ENCODE measurements at regions of chr9 and their contacts with region 1.

Region 1: GRCh38 chr9:22307013-22307711 is 139.5 kb upstream of the DMRTA1 start:
- DNase-seq: peak; percentile 43
- H3K4me3 Mint-ChIP-seq: no peak overlapping the region
- H3K27ac Mint-ChIP-seq: no peak overlapping the region
- H3K4me1 Mint-ChIP-seq: no peaks in the 10 kb centered on the region
- H3K27me3 Mint-ChIP-seq: no peaks in the 10 kb centered on the region
- CTCF ChIP-seq: peak; percentile 42

Region 2: DNA sequence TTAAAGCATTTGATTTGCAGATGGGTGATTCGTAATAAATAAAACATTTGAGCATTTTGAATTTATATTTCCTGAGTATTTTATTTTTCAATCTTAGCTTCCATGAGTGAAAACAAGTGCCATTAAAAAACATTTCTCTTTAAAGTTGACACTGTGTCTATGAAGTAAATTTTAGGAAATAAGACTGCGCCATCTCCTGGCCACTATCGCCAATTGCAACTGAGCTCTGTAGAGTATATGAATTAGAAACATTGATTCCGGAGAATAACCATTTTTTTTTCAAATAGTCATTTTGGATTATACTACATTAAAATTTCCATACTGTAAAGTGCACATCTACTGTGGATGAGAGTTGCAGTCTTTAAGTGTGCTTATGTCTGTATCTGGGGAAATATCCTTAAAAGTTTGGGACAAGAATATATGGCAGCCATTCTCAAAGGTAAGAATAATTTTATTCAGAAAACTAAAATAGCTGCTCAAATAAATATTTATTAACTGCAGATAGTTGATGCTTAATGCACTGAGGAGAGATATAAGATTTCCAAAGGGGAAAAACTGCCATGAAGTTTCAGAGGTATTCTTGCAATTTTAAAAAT is 145.4 kb after region 1 on chr9:
- CTCF ChIA-PET with region 1: interaction called, 56 read pairs
- POLR2A ChIA-PET with region 1: no interaction called
- intact Hi-C with region 1: loop called (anchors 1 kb)
- DNase-seq: peak; percentile 33
- H3K4me3 Mint-ChIP-seq: no peak overlapping the region
- H3K27ac Mint-ChIP-seq: no peak overlapping the region
- H3K4me1 Mint-ChIP-seq: no peaks in the 10 kb centered on the region
- H3K27me3 Mint-ChIP-seq: no peaks in the 10 kb centered on the region
- CTCF ChIP-seq: peak; percentile 39

Measured in MCF 10A (cell line).